Breast epithelium (tissue), 4 donors: ENCODE measurements at regions of chr11 and their contacts with region 1.

Region 1: GRCh38 chr11:14635546-14635945 is 8.1 kb upstream of the PDE3B start:
- DNase-seq: no peak
- H3K4me3 ChIP-seq: no peak overlapping the region
- H3K27ac ChIP-seq: no peak overlapping the region
- H3K4me1 ChIP-seq: no peaks in the 10 kb centered on the region
- H3K27me3 ChIP-seq: peaks cover 0 to 18% of the 10 kb centered on the region in 2 donors
- CTCF ChIP-seq: no peak
- POLR2A ChIP-seq: no peak

Region 2: GRCh38 chr11:14566331-14567063 is 69.0 kb before region 1 on chr11:
- intact Hi-C with region 1: no loop called
- DNase-seq: no peak
- H3K4me3 ChIP-seq: no peak overlapping the region
- H3K27ac ChIP-seq: no peak overlapping the region
- H3K4me1 ChIP-seq: no peaks in the 10 kb centered on the region
- H3K27me3 ChIP-seq: no peaks in the 10 kb centered on the region
- CTCF ChIP-seq: no peak
- POLR2A ChIP-seq: no peak

Region 3: GRCh38 chr11:14593684-14594083 is 41.9 kb before region 1 on chr11:
- intact Hi-C with region 1: no loop called
- DNase-seq: no peak
- H3K4me3 ChIP-seq: no peak overlapping the region
- H3K27ac ChIP-seq: no peak overlapping the region
- H3K4me1 ChIP-seq: no peaks in the 10 kb centered on the region
- H3K27me3 ChIP-seq: no peaks in the 10 kb centered on the region
- CTCF ChIP-seq: no peak
- POLR2A ChIP-seq: no peak

Region 4: DNA sequence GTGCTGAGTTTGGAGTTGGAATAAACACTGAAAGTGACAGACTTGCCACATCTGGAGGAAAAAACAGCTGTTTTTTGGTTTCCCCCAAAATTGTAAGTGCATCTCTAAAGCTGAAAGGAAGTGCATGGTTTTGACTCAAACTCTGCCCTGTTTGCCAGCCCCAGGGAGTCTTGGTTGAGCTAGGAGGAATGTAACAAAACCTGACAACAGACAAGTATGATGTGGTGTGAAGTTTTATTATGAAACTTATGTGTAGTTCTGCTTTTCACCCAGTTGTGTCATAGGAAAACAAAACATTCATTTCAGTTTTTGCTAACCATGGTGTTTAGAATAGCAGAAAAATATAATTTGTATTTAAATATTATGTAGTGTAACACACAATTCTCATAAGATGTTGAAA is 23.6 kb before region 1 on chr11:
- intact Hi-C with region 1: loop called (anchors 2 kb)
- DNase-seq: no peak
- H3K4me3 ChIP-seq: no peak overlapping the region
- H3K27ac ChIP-seq: no peak overlapping the region
- H3K4me1 ChIP-seq: no peaks in the 10 kb centered on the region
- H3K27me3 ChIP-seq: no peaks in the 10 kb centered on the region
- CTCF ChIP-seq: no peak
- POLR2A ChIP-seq: no peak

Region 5: DNA sequence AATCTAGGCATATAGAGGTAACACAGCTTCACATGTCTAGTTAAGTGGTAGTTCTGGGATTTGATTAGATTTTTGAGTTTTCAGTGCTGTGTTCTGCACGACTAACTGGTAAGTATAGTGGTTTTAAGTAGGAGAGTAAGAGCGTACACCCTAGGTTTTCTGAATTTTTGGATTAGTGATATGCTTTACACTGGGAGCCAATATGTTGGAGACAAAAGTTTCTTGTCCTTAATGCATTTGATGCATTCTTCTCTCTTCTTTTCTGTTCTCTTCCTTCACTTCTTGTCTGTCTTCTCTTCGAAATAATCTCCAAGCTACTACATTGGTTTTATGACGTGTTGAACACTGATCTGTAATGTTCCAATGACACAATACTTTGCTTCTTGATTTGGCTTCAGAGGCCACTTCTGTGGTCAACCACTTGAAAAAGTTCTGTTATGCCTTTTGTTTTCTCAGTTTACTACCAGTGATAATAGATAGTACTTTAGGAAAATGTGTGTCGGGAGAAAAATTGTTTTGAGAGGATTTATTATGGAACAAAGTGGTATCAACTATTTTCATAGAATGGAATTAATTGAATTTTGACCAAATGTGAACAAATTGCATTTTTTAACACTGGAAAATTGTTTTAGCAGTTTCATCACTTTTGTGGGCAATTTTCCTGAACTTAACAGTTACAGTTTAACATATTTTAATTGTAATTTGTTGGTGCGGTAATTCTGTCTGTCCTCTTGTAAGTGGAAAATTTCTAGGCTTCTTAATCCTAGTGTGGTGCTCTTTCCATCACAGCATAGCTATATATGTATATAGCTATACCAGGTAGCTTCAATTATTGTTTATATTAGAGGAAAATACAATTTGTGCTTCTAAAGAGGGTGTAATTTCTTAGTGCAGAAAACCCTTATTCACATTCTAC is 10.7 kb after region 1 on chr11:
- intact Hi-C with region 1: no loop called
- DNase-seq: no peak
- H3K4me3 ChIP-seq: no peak overlapping the region
- H3K27ac ChIP-seq: no peak overlapping the region
- H3K4me1 ChIP-seq: no peaks in the 10 kb centered on the region
- H3K27me3 ChIP-seq: peaks cover 0 to 34% of the 10 kb centered on the region in 2 donors
- CTCF ChIP-seq: no peak
- POLR2A ChIP-seq: no peak